CD4-positive, alpha-beta memory T cell (primary cell): ENCODE measurements at regions of chr17 and their contacts with region 1.

Region 1: GRCh38 chr17:50478391-50479381 is at the start of gene RSAD1:
- DNase-seq: peak; percentile 81 to 84 (median 83)
- H3K4me3 ChIP-seq: peak within 1 kb of the TSS; percentile 78 to 84
- H3K4me3 Mint-ChIP-seq: peak within 1 kb of the TSS; percentile 85 to 92 (median 90)
- H3K27ac ChIP-seq: peak within 1 kb of the TSS; percentile 74
- H3K27ac Mint-ChIP-seq: peak within 1 kb of the TSS; percentile 89 to 92 (median 89)
- H3K4me1 ChIP-seq: peaks cover 19% of the 10 kb centered on the region
- H3K4me1 Mint-ChIP-seq: peaks cover 15 to 30% (median 22%) of the 10 kb centered on the region in 4 donors
- H3K27me3 ChIP-seq: no peaks in the 10 kb centered on the region
- H3K27me3 Mint-ChIP-seq: peaks cover 3 to 4% of the 10 kb centered on the region in 2 donors
- total RNA-seq, gene RSAD1: 81.1 to 86.0 TPM

Region 2: GRCh38 chr17:50269477-50270434 is 208.9 kb before region 1 on chr17:
- CTCF ChIA-PET with region 1: no interaction called
- POLR2A ChIA-PET with region 1: no interaction called
- intact Hi-C with region 1: no loop called
- DNase-seq: peak; percentile 33 to 53 (median 42)
- H3K4me3 ChIP-seq: no peak overlapping the region
- H3K4me3 Mint-ChIP-seq: no peak overlapping the region
- H3K27ac ChIP-seq: no peak overlapping the region
- H3K27ac Mint-ChIP-seq: no peak overlapping the region
- H3K4me1 ChIP-seq: peaks cover 4% of the 10 kb centered on the region
- H3K4me1 Mint-ChIP-seq: peaks cover 6 to 8% (median 7%) of the 10 kb centered on the region in 4 donors
- H3K27me3 ChIP-seq: peaks cover 4% of the 10 kb centered on the region
- H3K27me3 Mint-ChIP-seq: peaks cover 6 to 11% of the 10 kb centered on the region in 2 donors

Region 3: DNA sequence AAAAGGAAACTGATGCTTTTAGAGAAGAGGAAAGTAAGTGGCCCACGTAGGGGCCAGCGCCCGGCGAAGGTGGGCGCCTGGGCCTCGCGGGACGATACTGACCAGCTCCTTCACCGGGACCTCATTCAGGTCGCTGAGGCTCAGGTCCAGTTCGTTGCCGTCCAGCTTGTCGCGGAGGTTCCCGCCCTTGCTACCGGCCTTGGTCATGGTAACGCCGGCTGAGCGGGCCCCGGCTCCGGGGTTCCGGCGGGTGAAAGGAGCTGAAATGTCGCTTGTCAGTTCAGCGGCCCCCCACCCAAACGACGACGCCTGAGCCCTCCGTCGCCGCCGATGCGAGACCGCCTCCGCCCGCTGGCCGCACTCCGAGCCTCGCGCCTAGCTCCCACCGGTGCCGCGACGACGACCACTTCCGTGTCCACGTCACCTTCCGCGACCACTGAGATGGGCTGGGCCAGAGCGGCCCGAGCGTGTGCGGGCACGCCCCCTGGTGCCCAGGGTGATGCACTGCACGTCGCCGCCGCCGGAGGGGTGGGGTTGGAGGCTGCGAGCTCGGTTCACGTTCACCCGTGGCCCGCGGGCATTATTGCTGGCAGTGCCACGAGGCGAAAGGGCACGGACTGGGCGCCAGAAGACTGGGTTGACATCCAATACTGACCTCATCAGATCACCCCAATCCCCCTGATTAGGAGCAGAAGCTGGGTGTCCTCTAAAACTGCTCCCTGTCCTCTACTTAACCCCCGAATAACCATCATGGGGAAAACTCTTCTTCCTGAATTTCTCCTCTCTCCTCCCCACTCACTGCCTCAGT is 81.4 kb before region 1 on chr17 and contains the start of gene LRRC59:
- CTCF ChIA-PET with region 1: interaction called, 30 read pairs
- POLR2A ChIA-PET with region 1: interaction called, 21 read pairs
- intact Hi-C with region 1: loop called (anchors 1 kb)
- DNase-seq: peak; percentile 88 to 96 (median 92)
- H3K4me3 ChIP-seq: peak within 1 kb of the TSS; percentile 75 to 82
- H3K4me3 Mint-ChIP-seq: peak within 1 kb of the TSS; percentile 87 to 97 (median 92)
- H3K27ac ChIP-seq: peak within 1 kb of the TSS; percentile 85
- H3K27ac Mint-ChIP-seq: peak within 1 kb of the TSS; percentile 84 to 99 (median 95)
- H3K4me1 ChIP-seq: peaks cover 30% of the 10 kb centered on the region
- H3K4me1 Mint-ChIP-seq: peaks cover 23 to 47% (median 30%) of the 10 kb centered on the region in 4 donors
- H3K27me3 ChIP-seq: no peaks in the 10 kb centered on the region
- H3K27me3 Mint-ChIP-seq: no peaks in the 10 kb centered on the region
- total RNA-seq, gene LRRC59: 30.3 to 30.7 TPM

Region 4: GRCh38 chr17:50458701-50459676 is 19.7 kb before region 1 on chr17:
- CTCF ChIA-PET with region 1: no interaction called
- POLR2A ChIA-PET with region 1: no interaction called
- intact Hi-C with region 1: no loop called
- DNase-seq: no peak
- H3K4me3 ChIP-seq: no peak overlapping the region
- H3K4me3 Mint-ChIP-seq: no peak overlapping the region
- H3K27ac ChIP-seq: no peak overlapping the region
- H3K27ac Mint-ChIP-seq: no peak overlapping the region
- H3K4me1 ChIP-seq: no peaks in the 10 kb centered on the region
- H3K4me1 Mint-ChIP-seq: peaks cover 0 to 5% (median 0%) of the 10 kb centered on the region in 4 donors
- H3K27me3 ChIP-seq: no peaks in the 10 kb centered on the region
- H3K27me3 Mint-ChIP-seq: no peaks in the 10 kb centered on the region

Region 5: GRCh38 chr17:50501054-50501453 is 22.4 kb after region 1 on chr17:
- CTCF ChIA-PET with region 1: interaction called, 32 read pairs
- POLR2A ChIA-PET with region 1: interaction called, 4 read pairs
- intact Hi-C with region 1: loop called (anchors 1 kb)
- DNase-seq: no peak
- H3K4me3 ChIP-seq: no peak overlapping the region
- H3K4me3 Mint-ChIP-seq: no peak overlapping the region
- H3K27ac ChIP-seq: no peak overlapping the region
- H3K27ac Mint-ChIP-seq: no peak overlapping the region
- H3K4me1 ChIP-seq: no peaks in the 10 kb centered on the region
- H3K4me1 Mint-ChIP-seq: peaks cover 0 to 8% (median 3%) of the 10 kb centered on the region in 4 donors
- H3K27me3 ChIP-seq: no peaks in the 10 kb centered on the region
- H3K27me3 Mint-ChIP-seq: no peaks in the 10 kb centered on the region

Region 6: GRCh38 chr17:50541716-50542688 is 63.3 kb after region 1 on chr17:
- CTCF ChIA-PET with region 1: interaction called, 7 read pairs
- POLR2A ChIA-PET with region 1: no interaction called
- intact Hi-C with region 1: loop called (anchors 1 kb)
- DNase-seq: peak; percentile 74 to 86 (median 81)
- H3K4me3 ChIP-seq: peak overlapping the region; percentile 45 to 51
- H3K4me3 Mint-ChIP-seq: peak overlapping the region; percentile 80 to 89 (median 86)
- H3K27ac ChIP-seq: peak overlapping the region; percentile 60
- H3K27ac Mint-ChIP-seq: peak overlapping the region; percentile 17 to 93 (median 77)
- H3K4me1 ChIP-seq: peaks cover 18% of the 10 kb centered on the region
- H3K4me1 Mint-ChIP-seq: peaks cover 8 to 24% (median 18%) of the 10 kb centered on the region in 4 donors
- H3K27me3 ChIP-seq: no peaks in the 10 kb centered on the region
- H3K27me3 Mint-ChIP-seq: peaks cover 1 to 3% of the 10 kb centered on the region in 2 donors

Region 7: DNA sequence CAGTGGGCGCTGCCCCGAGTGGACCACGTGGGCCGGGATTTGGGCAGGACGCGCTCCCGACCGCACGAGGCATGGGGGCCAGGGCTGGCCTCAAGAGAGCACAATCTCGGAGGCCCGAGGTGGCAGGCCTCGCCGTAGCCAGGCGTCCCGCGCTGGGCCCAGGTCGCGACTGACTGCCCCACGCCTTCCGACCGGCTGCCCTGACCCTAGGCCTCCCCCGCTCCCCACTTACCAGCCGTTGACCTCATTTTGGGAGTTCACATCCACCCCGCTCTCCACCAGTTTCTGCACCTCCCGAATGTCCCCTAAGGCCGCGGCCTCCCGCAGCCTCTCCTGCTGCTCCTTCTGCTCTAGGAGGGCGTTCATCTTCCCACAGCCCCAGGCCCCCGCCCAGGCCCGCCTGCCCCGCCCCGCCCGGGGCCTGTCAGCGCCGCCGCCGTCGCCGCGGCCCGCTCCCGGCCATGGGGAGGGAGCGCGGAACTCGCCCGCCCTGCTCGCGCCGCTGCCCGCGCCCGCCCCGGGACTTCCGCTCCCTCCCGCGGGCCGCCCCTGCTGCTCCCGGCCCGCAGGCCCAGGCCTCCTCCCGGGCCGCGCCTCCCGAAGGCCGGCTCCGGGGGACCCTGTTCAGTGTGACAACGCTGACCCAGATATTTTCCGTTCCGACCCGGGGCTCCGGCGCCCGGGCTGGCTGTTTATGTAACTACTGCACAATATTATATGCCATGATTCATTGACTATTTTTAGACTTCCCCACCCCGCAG is 228.8 kb after region 1 on chr17 and contains the start of gene ANKRD40:
- CTCF ChIA-PET with region 1: no interaction called
- POLR2A ChIA-PET with region 1: no interaction called
- intact Hi-C with region 1: loop called (anchors 5 kb)
- DNase-seq: peak; percentile 91 to 93 (median 91)
- H3K4me3 ChIP-seq: peak within 1 kb of the TSS; percentile 66 to 81
- H3K4me3 Mint-ChIP-seq: peak within 1 kb of the TSS; percentile 90 to 97 (median 94)
- H3K27ac ChIP-seq: peak within 1 kb of the TSS; percentile 92
- H3K27ac Mint-ChIP-seq: peak within 1 kb of the TSS; percentile 96 to 99 (median 98)
- H3K4me1 ChIP-seq: peaks cover 54% of the 10 kb centered on the region
- H3K4me1 Mint-ChIP-seq: peaks cover 32 to 57% (median 42%) of the 10 kb centered on the region in 4 donors
- H3K27me3 ChIP-seq: no peaks in the 10 kb centered on the region
- H3K27me3 Mint-ChIP-seq: no peaks in the 10 kb centered on the region
- total RNA-seq, gene ANKRD40: 34.2 to 39.3 TPM